Endothelial cell of umbilical vein (primary cell): ENCODE measurements at regions of chr16 and their contacts with region 1.

Region 1: GRCh38 chr16:70706946-70707465 is 21.2 kb upstream of the MTSS2 start:
- DNase-seq: peak; percentile 76
- H3K4me3 ChIP-seq: no peak overlapping the region
- H3K27ac ChIP-seq: peak overlapping the region; percentile 44
- H3K4me1 ChIP-seq: peaks cover 38% of the 10 kb centered on the region
- H3K27me3 ChIP-seq: no peaks in the 10 kb centered on the region
- CTCF ChIP-seq: no peak
- POLR2A ChIP-seq: no peak

Region 2: DNA sequence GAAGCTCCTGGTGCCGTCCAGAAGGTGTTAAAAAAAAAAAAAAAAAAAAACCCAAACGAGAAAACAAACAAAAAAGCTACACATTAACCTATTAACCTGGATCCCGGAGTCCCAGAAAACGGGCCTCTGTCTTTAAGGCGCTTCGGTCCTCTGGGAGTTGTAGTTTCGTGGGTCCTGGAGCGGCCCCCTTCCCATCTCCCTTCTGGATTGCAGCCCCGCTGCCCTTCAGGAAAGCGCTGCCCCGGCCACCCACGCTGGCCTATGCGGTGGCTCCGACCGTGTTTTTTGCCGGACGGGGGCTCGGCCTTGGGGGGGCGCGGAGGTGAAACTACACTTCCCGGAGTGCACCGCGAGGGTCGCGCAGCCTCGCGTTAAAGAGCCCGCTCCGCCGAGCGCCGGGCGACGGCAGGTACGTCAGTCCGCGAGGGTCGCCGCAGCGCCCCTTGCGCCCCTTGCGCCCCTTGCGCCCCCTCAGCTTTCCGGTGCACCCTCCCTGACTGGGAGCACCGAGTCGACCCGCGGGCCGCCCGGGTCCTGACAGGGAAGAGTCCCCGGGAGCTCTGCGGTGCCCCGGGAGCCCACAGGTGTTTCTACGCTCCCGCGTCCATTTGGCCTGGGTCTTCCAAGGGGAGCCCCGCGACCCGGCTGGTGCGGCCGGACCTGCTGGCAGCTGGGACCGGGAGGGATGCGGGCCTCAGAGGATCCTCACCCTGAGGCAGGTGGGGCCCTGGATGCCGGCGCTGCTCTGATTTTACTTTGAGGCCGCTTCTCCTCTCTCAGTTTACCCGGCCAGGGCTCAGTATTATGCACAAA is 252.6 kb before region 1 on chr16 and contains the start of gene FCSK:
- CTCF ChIA-PET with region 1: no interaction called
- POLR2A ChIA-PET with region 1: no interaction called
- dilution Hi-C with region 1: no loop called
- intact Hi-C with region 1: no loop called
- DNase-seq: peak; percentile 86
- H3K4me3 ChIP-seq: peak within 1 kb of the TSS; percentile 72 to 95 (median 89)
- H3K27ac ChIP-seq: peak within 1 kb of the TSS; percentile 100
- H3K4me1 ChIP-seq: peaks cover 6% of the 10 kb centered on the region
- H3K27me3 ChIP-seq: no peaks in the 10 kb centered on the region
- CTCF ChIP-seq: no peak
- POLR2A ChIP-seq: peak; percentile 33
- total RNA-seq, gene FCSK: 13.2 and 18.0 TPM in 2 replicates

Region 3: DNA sequence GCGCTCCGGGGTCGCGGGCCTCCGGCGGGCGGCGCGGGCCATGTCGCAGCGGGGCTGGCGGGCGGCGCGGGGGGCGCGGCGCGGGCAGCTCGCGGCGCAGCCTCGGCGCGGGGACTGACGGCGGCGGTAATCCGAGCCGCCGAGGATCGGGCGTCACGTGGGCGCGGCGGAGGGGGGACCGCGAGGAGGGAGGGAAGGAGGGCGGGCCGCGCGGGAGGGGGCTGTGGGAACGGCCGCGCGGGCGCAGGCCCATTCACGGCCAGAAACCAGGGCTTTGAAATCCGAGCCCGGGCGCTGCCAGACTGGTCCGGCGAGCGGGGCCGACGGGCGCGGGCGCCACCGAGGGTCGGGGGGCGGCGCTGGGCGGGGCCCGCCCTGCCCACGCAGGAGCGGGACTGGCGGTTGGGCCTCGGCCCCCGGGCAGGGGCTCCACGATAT is 21.0 kb before region 1 on chr16 and contains the start of gene MTSS2:
- CTCF ChIA-PET with region 1: interaction called, 5 read pairs
- POLR2A ChIA-PET with region 1: no interaction called
- dilution Hi-C with region 1: no loop called
- intact Hi-C with region 1: loop called (anchors 2 kb)
- DNase-seq: peak; percentile 89
- H3K4me3 ChIP-seq: peak within 1 kb of the TSS; percentile 58 to 94 (median 61)
- H3K27ac ChIP-seq: peak within 1 kb of the TSS; percentile 34
- H3K4me1 ChIP-seq: peaks cover 21% of the 10 kb centered on the region
- H3K27me3 ChIP-seq: no peaks in the 10 kb centered on the region
- CTCF ChIP-seq: no peak
- POLR2A ChIP-seq: peak; percentile 49
- total RNA-seq, gene MTSS2: 37.6 and 42.3 TPM in 2 replicates